PC-3 (cell line): ENCODE measurements at regions of chr2 and their contacts with region 1.

Region 1: DNA sequence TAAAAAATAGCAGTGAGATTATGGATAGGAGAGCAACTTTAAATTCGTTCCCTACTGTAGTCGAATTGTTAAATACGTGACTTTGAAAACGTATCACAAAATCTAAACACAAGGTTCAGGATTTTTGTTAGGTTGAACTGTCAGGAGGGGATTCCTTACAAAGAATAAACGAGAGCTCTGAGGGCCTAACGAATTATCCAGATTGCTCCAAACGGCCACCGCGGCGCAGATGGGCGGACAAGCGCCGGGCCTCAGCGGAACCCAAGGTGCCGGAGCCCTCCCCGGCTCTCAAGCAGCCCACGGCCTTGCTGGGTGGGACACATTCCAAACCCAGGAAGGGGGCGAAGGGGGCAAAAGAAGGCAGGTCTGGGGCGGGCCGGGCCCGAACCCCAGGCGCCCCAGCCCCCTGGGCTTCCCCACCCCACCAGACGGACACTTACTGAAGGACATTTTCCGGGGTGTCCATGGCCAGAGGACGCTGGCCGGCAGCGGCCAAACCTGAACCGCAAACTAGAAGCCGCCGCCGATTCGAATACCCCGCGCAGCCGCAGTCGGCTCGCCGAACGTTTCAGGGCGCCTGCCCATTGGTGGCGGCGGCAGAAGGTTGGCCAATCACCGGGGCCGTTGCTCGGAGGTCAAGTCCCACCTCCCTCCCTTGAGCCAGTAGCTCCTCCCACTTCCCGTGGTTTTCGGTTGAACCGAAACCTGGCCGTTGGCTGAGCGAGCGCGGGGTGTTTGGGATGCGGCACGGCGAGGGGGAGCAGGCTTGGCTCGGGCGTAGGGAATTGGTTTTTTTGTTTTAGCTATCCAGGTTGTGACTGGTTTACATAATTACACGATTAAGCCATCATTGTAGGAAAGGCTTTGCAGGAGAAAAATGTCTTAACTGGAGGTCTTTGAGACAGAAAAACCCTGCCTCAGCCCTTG is at the start of gene BUB1:
- DNase-seq: peak; percentile 98
- ATAC-seq: peak; percentile 89
- H3K4me3 ChIP-seq: peak within 1 kb of the TSS; percentile 94
- H3K27ac ChIP-seq: peak within 1 kb of the TSS; percentile 65
- H3K4me1 ChIP-seq: peaks cover 27% of the 10 kb centered on the region
- H3K27me3 ChIP-seq: no peaks in the 10 kb centered on the region
- CTCF ChIP-seq: no peak
- total RNA-seq, gene BUB1: 80.1 and 89.8 TPM in 2 replicates

Region 2: GRCh38 chr2:110140401-110140800 is 537.4 kb before region 1 on chr2:
- CTCF ChIA-PET with region 1: no interaction called
- POLR2A ChIA-PET with region 1: no interaction called
- intact Hi-C with region 1: no loop called
- DNase-seq: no peak
- ATAC-seq: no peak
- H3K4me3 ChIP-seq: no peak overlapping the region
- H3K27ac ChIP-seq: no peak overlapping the region
- H3K4me1 ChIP-seq: no peaks in the 10 kb centered on the region
- H3K27me3 ChIP-seq: no peaks in the 10 kb centered on the region
- CTCF ChIP-seq: no peak

Region 3: DNA sequence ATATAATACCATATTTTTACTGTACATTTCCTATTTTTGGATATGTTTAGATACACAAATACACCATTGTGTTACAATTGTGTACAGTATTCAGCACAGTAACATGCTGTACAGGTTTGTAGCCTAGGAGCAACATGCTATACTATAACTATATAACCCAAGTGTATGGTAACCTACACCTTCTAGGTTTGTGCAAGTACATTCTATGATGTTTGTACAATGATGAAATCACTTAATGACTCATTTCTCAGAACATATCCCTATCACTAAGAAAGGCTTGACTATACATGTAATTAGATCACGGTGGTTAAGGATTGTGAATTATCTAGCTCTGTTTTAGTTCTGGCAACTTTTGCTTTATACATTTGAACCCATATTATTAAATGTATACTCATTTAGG is 504.3 kb before region 1 on chr2:
- CTCF ChIA-PET with region 1: no interaction called
- POLR2A ChIA-PET with region 1: no interaction called
- intact Hi-C with region 1: no loop called
- DNase-seq: peak; percentile 84
- ATAC-seq: peak; percentile 100
- H3K4me3 ChIP-seq: no peak overlapping the region
- H3K27ac ChIP-seq: no peak overlapping the region
- H3K4me1 ChIP-seq: peaks cover 12% of the 10 kb centered on the region
- H3K27me3 ChIP-seq: no peaks in the 10 kb centered on the region
- CTCF ChIP-seq: no peak

Region 4: GRCh38 chr2:110755491-110756078 is 77.8 kb after region 1 on chr2:
- CTCF ChIA-PET with region 1: interaction called, 12 read pairs
- POLR2A ChIA-PET with region 1: no interaction called
- intact Hi-C with region 1: loop called (anchors 1 kb)
- DNase-seq: peak; percentile 51
- ATAC-seq: no peak
- H3K4me3 ChIP-seq: no peak overlapping the region
- H3K27ac ChIP-seq: no peak overlapping the region
- H3K4me1 ChIP-seq: no peaks in the 10 kb centered on the region
- H3K27me3 ChIP-seq: no peaks in the 10 kb centered on the region
- CTCF ChIP-seq: peak; percentile 75

Region 5: DNA sequence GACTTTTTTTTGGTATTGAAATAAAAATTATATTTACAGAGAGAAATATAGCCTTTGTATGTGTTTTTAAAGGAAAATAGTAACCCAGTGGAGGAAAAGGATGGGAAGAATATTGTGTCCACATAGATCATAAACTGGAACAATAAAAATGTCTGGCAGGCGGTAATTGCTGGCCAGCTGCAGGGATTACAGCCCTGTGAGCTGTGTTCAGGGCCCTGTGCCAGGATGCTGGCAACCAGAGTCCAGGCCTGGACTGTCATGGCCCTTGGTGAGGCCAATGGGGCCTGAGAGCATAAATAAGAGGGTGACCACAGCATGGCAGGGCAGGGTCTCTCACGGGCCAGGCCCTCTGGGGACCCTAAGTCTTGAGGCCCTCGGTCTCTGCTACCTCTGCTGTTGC is 225.8 kb after region 1 on chr2:
- CTCF ChIA-PET with region 1: no interaction called
- POLR2A ChIA-PET with region 1: no interaction called
- intact Hi-C with region 1: no loop called
- DNase-seq: no peak
- ATAC-seq: no peak
- H3K4me3 ChIP-seq: no peak overlapping the region
- H3K27ac ChIP-seq: no peak overlapping the region
- H3K4me1 ChIP-seq: no peaks in the 10 kb centered on the region
- H3K27me3 ChIP-seq: no peaks in the 10 kb centered on the region
- CTCF ChIP-seq: no peak